ENCODE measurements at regions of chr6 and their contacts with region 1.

Region 1: GRCh38 chr6:166275714-166276166 is 32.5 kb downstream of the PRR18 start:
- DNase-seq: peak; percentile 88
- H3K4me3 ChIP-seq: no peak overlapping the region; a peak in 1 of 4 replicates
- H3K27ac ChIP-seq: no peak overlapping the region
- H3K4me1 ChIP-seq: no peaks in the 10 kb centered on the region; a peak in 1 of 4 replicates
- H3K27me3 ChIP-seq: peaks cover 14% of the 10 kb centered on the region; the same call in 1 of the 2 replicates
- CTCF ChIP-seq: peak; percentile 98
- EP300 ChIP-seq: no peak
- RAD21 ChIP-seq: peak; percentile 92

Region 2: DNA sequence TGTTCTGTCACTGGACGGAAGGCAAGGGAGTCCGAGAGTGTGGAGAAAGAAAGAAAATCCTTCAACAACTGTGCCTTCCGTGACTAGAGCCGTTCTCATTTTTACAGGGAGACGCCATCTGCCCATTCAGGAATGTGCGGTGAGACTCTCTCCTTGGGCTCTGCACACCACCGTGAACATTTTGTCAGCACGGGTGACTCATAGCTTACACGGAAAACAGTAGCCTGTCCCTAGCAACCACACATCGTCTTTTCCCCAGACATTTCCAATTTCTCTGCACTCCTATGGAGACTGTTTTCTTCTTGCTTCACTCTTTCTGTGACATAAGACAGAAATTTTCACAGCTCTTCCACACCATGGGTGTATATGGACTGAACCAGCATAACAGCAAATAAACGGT is 163.2 kb before region 1 on chr6:
- CTCF ChIA-PET with region 1: no interaction called
- POLR2A ChIA-PET with region 1: no interaction called
- DNase-seq: no peak
- H3K4me3 ChIP-seq: no peak overlapping the region
- H3K27ac ChIP-seq: no peak overlapping the region
- H3K4me1 ChIP-seq: no peaks in the 10 kb centered on the region
- H3K27me3 ChIP-seq: no peaks in the 10 kb centered on the region
- CTCF ChIP-seq: no peak
- EP300 ChIP-seq: no peak
- RAD21 ChIP-seq: no peak

Region 3: GRCh38 chr6:166228839-166229528 is 46.8 kb before region 1 on chr6:
- CTCF ChIA-PET with region 1: no interaction called
- POLR2A ChIA-PET with region 1: no interaction called
- DNase-seq: no peak
- H3K4me3 ChIP-seq: no peak overlapping the region
- H3K27ac ChIP-seq: no peak overlapping the region
- H3K4me1 ChIP-seq: no peaks in the 10 kb centered on the region
- H3K27me3 ChIP-seq: peaks cover 22% of the 10 kb centered on the region; the same call in 1 of the 2 replicates
- CTCF ChIP-seq: no peak
- EP300 ChIP-seq: no peak
- RAD21 ChIP-seq: no peak

Region 4: GRCh38 chr6:166286839-166287271 is 11.1 kb after region 1 on chr6:
- CTCF ChIA-PET with region 1: interaction called, 30 read pairs
- POLR2A ChIA-PET with region 1: no interaction called
- DNase-seq: no peak
- H3K4me3 ChIP-seq: no peak overlapping the region
- H3K27ac ChIP-seq: no peak overlapping the region
- H3K4me1 ChIP-seq: no peaks in the 10 kb centered on the region
- H3K27me3 ChIP-seq: peaks cover 38% of the 10 kb centered on the region; the same call in 1 of the 2 replicates
- CTCF ChIP-seq: no peak
- EP300 ChIP-seq: no peak
- RAD21 ChIP-seq: no peak

Region 5: GRCh38 chr6:166365221-166365620 is 89.5 kb after region 1 on chr6:
- CTCF ChIA-PET with region 1: no interaction called
- POLR2A ChIA-PET with region 1: no interaction called
- DNase-seq: no peak
- H3K4me3 ChIP-seq: no peak overlapping the region
- H3K27ac ChIP-seq: peak overlapping the region in 1 of 2 experiments; percentile 44; a peak in 2 of 4 replicates
- H3K4me1 ChIP-seq: peaks cover 2 to 14% of the 10 kb centered on the region in 2 experiments; a peak in 2 of 4 replicates
- H3K27me3 ChIP-seq: no peaks in the 10 kb centered on the region
- CTCF ChIP-seq: no peak
- EP300 ChIP-seq: no peak
- RAD21 ChIP-seq: no peak

Region 6: DNA sequence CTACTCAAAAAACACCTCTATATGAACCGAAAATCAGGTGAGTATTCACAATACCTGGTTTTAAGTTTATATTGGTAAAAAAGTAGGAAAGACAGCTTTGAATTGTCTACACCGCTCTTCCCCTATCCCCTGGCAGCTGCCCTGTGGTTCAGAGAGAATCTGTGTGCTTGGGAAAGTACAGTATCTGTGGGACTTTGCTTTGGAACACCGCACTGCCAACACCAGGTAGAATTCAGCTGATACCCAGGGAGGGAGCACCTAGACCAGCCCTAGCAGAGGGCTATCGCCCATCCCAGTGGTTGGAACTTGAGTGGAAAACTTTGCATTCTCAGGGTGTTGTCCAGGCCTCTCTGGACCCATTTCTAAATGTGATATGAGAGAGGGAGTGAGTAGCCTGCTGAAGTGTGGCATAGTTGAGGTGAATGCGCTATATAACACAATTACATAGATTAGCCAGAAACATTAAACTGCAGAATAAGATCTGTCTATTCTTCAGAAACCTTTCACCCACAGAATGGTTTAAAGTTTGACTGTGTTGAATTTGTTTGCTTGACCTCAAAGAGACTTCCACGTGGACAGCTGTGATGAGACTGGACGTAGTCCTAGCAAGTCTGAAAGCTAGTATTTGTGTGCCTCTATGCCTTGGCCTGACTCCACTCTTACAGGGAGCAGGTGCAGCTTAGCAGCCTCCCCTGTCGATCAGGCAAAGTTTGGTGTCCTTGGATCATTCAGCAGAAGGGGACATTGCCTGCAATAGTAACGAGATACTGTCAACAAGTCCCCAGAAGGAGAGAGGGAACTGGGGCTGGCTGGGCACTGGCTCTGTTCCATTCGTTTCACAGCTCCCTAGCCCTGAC is 118.5 kb after region 1 on chr6:
- CTCF ChIA-PET with region 1: interaction called, 23 read pairs
- POLR2A ChIA-PET with region 1: no interaction called
- DNase-seq: no peak
- H3K4me3 ChIP-seq: no peak overlapping the region
- H3K27ac ChIP-seq: no peak overlapping the region
- H3K4me1 ChIP-seq: peaks cover 0 to 10% of the 10 kb centered on the region in 2 experiments; a peak in 1 of 4 replicates
- H3K27me3 ChIP-seq: no peaks in the 10 kb centered on the region
- CTCF ChIP-seq: no peak
- EP300 ChIP-seq: no peak
- RAD21 ChIP-seq: no peak